GM12878 (cell line): ENCODE measurements at regions of chr10 and their contacts with region 1.

Region 1: GRCh38 chr10:57579926-57580325 is 687.8 kb downstream of the IPMK start:
- DNase-seq: no peak
- ATAC-seq: peak; percentile 74; the same call in 2 of the 3 replicates
- H3K4me3 ChIP-seq: no peak overlapping the region
- H3K27ac ChIP-seq: no peak overlapping the region
- H3K4me1 ChIP-seq: no peaks in the 10 kb centered on the region
- H3K27me3 ChIP-seq: no peaks in the 10 kb centered on the region
- CTCF ChIP-seq: peak; percentile 20 to 41 (median 32); a peak in 4 of 6 replicates
- EP300 ChIP-seq: no peak
- POLR2A ChIP-seq: no peak
- RAD21 ChIP-seq: peak; percentile 50

Region 2: GRCh38 chr10:58064714-58065528 is 485.0 kb after region 1 on chr10:
- CTCF ChIA-PET with region 1: interaction called, 4 read pairs
- POLR2A ChIA-PET with region 1: no interaction called
- RAD21 ChIA-PET with region 1: no interaction called
- SMC1A ChIA-PET with region 1: no interaction called
- in situ Hi-C with region 1: no loop called
- intact Hi-C with region 1: loop called (anchors 5 kb)
- DNase-seq: no peak
- ATAC-seq: peak; percentile 38
- H3K4me3 ChIP-seq: no peak overlapping the region
- H3K27ac ChIP-seq: no peak overlapping the region
- H3K4me1 ChIP-seq: no peaks in the 10 kb centered on the region
- H3K27me3 ChIP-seq: no peaks in the 10 kb centered on the region; a peak in 1 of 4 replicates
- CTCF ChIP-seq: peak; percentile 54 to 61 (median 58)
- EP300 ChIP-seq: no peak
- POLR2A ChIP-seq: no peak
- RAD21 ChIP-seq: peak; percentile 83

Region 3: DNA sequence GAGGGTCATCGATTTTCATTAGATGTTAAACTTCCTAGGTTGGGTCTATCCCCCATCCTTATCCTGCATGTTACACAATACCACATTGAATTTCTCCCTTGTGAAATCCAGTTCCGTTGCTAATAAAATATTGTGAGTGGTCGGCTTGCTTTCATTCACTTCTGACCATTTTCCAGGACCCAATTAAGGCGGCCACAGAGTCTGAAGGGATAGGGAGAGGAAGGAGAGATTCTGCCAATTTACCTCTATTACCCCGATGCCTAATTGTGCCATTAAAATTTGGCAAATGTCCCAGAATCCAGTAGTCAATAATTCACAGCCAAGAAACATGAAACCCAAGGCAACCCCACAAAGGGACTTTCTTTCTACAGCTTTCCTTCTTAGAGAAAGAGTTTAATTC is 557.9 kb after region 1 on chr10:
- CTCF ChIA-PET with region 1: no interaction called
- POLR2A ChIA-PET with region 1: no interaction called
- RAD21 ChIA-PET with region 1: no interaction called
- SMC1A ChIA-PET with region 1: no interaction called
- in situ Hi-C with region 1: loop called (anchors 25 kb)
- intact Hi-C with region 1: no loop called
- DNase-seq: no peak
- ATAC-seq: no peak
- H3K4me3 ChIP-seq: no peak overlapping the region
- H3K27ac ChIP-seq: no peak overlapping the region
- H3K4me1 ChIP-seq: no peaks in the 10 kb centered on the region
- H3K27me3 ChIP-seq: no peaks in the 10 kb centered on the region; a peak in 1 of 4 replicates
- CTCF ChIP-seq: no peak
- EP300 ChIP-seq: no peak
- POLR2A ChIP-seq: no peak
- RAD21 ChIP-seq: no peak

Region 4: GRCh38 chr10:58152673-58153263 is 572.8 kb after region 1 on chr10:
- CTCF ChIA-PET with region 1: interaction called, 7 read pairs
- POLR2A ChIA-PET with region 1: no interaction called
- RAD21 ChIA-PET with region 1: no interaction called
- SMC1A ChIA-PET with region 1: no interaction called
- in situ Hi-C with region 1: loop called (anchors 25 kb)
- intact Hi-C with region 1: loop called (anchors 10 kb)
- DNase-seq: no peak
- ATAC-seq: peak; percentile 70
- H3K4me3 ChIP-seq: no peak overlapping the region
- H3K27ac ChIP-seq: no peak overlapping the region
- H3K4me1 ChIP-seq: no peaks in the 10 kb centered on the region
- H3K27me3 ChIP-seq: no peaks in the 10 kb centered on the region
- CTCF ChIP-seq: peak; percentile 47 to 64 (median 57); a peak in 5 of 6 replicates
- EP300 ChIP-seq: no peak
- POLR2A ChIP-seq: no peak
- RAD21 ChIP-seq: peak; percentile 58